Lower leg skin (tissue), 4 donors: ENCODE measurements at regions of chr5 and their contacts with region 1.

Region 1: DNA sequence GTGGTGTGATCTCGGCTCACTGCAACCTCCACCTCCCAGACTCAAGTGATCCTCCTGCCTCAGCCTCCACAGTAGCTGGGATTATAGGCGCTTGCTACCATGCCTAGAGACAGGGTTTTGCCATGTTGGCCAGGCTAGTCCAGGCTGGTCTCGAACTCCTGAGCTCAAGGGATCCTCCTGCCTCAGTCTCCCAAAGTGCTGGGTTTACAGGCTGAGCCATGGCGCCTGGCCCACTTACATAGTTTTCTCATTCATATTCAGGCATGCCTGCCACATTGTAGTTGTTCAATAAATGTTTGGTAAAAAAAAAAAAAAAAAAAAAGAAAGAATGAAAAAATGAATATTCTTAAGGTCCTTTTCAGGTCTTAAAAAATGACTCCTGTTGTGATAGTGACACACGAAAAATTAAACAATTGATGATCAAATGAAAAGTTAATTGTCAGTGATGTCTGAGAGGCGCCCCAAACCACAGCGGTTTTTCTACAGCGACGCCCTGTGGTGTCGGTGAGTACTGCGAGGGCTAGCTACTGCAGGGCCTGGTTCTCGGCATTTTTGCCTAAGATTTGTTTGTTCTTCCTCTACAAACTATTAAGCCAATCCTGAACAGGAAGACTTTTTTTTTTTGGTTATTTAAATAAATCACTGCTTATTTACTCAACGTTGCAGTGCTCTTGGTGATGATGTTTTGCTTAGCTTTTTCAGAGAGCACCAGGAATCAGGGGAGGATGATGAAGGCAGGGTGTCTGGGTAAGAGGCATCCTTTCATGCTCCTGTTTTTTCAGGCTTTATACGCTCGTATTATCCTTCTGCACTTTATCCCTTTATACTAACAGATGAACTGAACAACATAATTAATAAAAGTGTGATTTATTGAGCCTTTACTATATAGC is 67.0 kb upstream of the DPYSL3 start:
- DNase-seq: peak; percentile 37 to 91
- H3K4me3 ChIP-seq: no peak overlapping the region
- CTCF ChIP-seq: no peak
- POLR2A ChIP-seq: no peak

Region 2: GRCh38 chr5:147223948-147224791 is 352.7 kb before region 1 on chr5:
- intact Hi-C with region 1: loop called (anchors 10 kb)
- DNase-seq: no peak
- H3K4me3 ChIP-seq: no peak overlapping the region
- CTCF ChIP-seq: no peak
- POLR2A ChIP-seq: no peak

Region 3: GRCh38 chr5:147453875-147454814 is 122.7 kb before region 1 on chr5:
- intact Hi-C with region 1: loop called (anchors 5 kb)
- DNase-seq: peak; percentile 73 to 97
- H3K4me3 ChIP-seq: peak overlapping the region; percentile 57
- CTCF ChIP-seq: peak in 1 of 3 donors; percentile 77
- POLR2A ChIP-seq: no peak

Region 4: GRCh38 chr5:147464211-147464610 is 112.7 kb before region 1 on chr5:
- intact Hi-C with region 1: no loop called
- DNase-seq: no peak
- H3K4me3 ChIP-seq: no peak overlapping the region
- CTCF ChIP-seq: no peak
- POLR2A ChIP-seq: no peak

Region 5: GRCh38 chr5:147619281-147619878 is 42.5 kb after region 1 on chr5:
- intact Hi-C with region 1: no loop called
- DNase-seq: no peak
- H3K4me3 ChIP-seq: no peak overlapping the region
- CTCF ChIP-seq: no peak
- POLR2A ChIP-seq: no peak